Caco-2 (cell line): ENCODE measurements at regions of chr17 and their contacts with region 1.

Region 1: DNA sequence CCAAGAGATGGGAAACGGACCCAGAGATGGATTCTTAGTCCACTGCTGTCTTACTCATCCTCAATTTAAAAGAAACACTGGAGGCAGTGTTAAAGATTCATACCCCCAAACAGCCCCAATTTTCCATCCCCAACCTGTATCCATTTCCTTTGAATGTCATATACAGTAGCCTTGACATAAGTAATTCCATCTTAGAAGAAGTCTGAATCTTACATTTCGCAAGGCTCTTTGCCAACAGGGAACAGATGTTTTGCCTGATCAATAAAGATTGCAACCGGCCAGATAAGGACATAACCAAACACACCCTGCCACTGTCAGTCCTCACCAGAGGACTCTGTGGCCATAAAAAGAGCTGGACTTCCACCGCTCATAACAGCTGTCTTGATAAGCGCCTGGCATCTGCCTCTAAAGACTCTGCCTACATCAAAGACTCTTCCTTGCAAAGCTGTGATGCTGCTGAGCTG is 59.0 kb upstream of the MED9 start:
- DNase-seq: peak; percentile 74 to 88
- H3K4me3 ChIP-seq: no peak overlapping the region
- H3K4me3 Mint-ChIP-seq: no peak overlapping the region
- H3K27ac Mint-ChIP-seq: peak overlapping the region; percentile 43
- H3K4me1 ChIP-seq: peaks cover 34% of the 10 kb centered on the region
- H3K4me1 Mint-ChIP-seq: peaks cover 34% of the 10 kb centered on the region
- H3K27me3 ChIP-seq: no peaks in the 10 kb centered on the region
- H3K27me3 Mint-ChIP-seq: no peaks in the 10 kb centered on the region
- CTCF ChIP-seq: no peak

Region 2: GRCh38 chr17:17258998-17259397 is 158.8 kb before region 1 on chr17:
- CTCF ChIA-PET with region 1: no interaction called
- POLR2A ChIA-PET with region 1: no interaction called
- intact Hi-C with region 1: no loop called
- DNase-seq: no peak
- H3K4me3 ChIP-seq: no peak overlapping the region
- H3K4me3 Mint-ChIP-seq: no peak overlapping the region
- H3K27ac Mint-ChIP-seq: no peak overlapping the region
- H3K4me1 ChIP-seq: no peaks in the 10 kb centered on the region
- H3K4me1 Mint-ChIP-seq: no peaks in the 10 kb centered on the region
- H3K27me3 ChIP-seq: no peaks in the 10 kb centered on the region
- H3K27me3 Mint-ChIP-seq: no peaks in the 10 kb centered on the region
- CTCF ChIP-seq: no peak

Region 3: DNA sequence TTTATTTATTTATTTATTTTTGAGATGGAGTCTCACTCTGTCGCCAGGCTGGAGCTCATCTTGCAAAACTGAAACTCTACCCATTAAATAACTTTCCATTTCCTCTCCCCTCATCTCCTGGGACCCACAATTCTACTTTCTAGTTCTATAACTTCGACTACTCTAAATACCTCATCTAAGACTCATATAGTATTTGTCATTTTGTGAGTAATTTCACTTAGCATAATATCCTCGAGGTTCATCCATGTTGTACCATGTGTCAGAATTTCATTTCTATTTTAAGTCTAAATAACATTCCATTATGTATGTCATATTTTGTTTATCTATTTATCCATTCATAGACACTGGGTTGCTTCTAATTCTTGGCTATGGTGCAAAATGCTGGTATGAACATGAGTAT is 119.6 kb before region 1 on chr17:
- CTCF ChIA-PET with region 1: no interaction called
- POLR2A ChIA-PET with region 1: no interaction called
- intact Hi-C with region 1: no loop called
- DNase-seq: no peak
- H3K4me3 ChIP-seq: no peak overlapping the region
- H3K4me3 Mint-ChIP-seq: no peak overlapping the region
- H3K27ac Mint-ChIP-seq: no peak overlapping the region
- H3K4me1 ChIP-seq: no peaks in the 10 kb centered on the region; the same call in 1 of the 2 replicates
- H3K4me1 Mint-ChIP-seq: no peaks in the 10 kb centered on the region
- H3K27me3 ChIP-seq: no peaks in the 10 kb centered on the region
- H3K27me3 Mint-ChIP-seq: no peaks in the 10 kb centered on the region
- CTCF ChIP-seq: no peak

Region 4: GRCh38 chr17:17401271-17401781 is 16.4 kb before region 1 on chr17:
- CTCF ChIA-PET with region 1: no interaction called
- POLR2A ChIA-PET with region 1: interaction called, 11 read pairs
- intact Hi-C with region 1: no loop called
- DNase-seq: peak in 1 of 2 experiments; percentile 13
- H3K4me3 ChIP-seq: no peak overlapping the region
- H3K4me3 Mint-ChIP-seq: no peak overlapping the region
- H3K27ac Mint-ChIP-seq: no peak overlapping the region
- H3K4me1 ChIP-seq: peaks cover 4% of the 10 kb centered on the region; the same call in 1 of the 2 replicates
- H3K4me1 Mint-ChIP-seq: peaks cover 4% of the 10 kb centered on the region
- H3K27me3 ChIP-seq: no peaks in the 10 kb centered on the region
- H3K27me3 Mint-ChIP-seq: no peaks in the 10 kb centered on the region
- CTCF ChIP-seq: no peak

Region 5: DNA sequence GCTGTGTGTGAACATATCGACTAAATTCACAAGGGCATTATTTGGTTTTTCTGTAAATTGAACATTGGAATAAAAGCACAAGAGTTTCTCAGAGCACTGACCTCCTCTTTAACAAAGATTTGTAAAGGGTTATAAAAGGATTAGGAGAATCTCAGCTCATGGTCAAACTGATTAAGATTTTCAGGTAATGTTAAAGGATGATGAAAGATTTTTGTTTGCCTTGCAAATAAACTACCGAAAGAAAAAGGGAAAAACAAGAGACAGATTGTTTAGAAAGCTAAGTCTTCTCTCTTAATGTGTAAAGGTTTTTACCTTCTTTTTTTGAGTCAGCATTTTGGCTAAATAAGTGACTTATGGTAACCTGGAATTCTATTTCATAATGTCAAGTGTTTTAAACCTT is 11.5 kb after region 1 on chr17:
- CTCF ChIA-PET with region 1: interaction called, 3 read pairs
- POLR2A ChIA-PET with region 1: no interaction called
- intact Hi-C with region 1: loop called (anchors 1 kb)
- DNase-seq: no peak
- H3K4me3 ChIP-seq: no peak overlapping the region
- H3K4me3 Mint-ChIP-seq: no peak overlapping the region
- H3K27ac Mint-ChIP-seq: no peak overlapping the region
- H3K4me1 ChIP-seq: peaks cover 38% of the 10 kb centered on the region
- H3K4me1 Mint-ChIP-seq: peaks cover 29% of the 10 kb centered on the region
- H3K27me3 ChIP-seq: no peaks in the 10 kb centered on the region
- H3K27me3 Mint-ChIP-seq: no peaks in the 10 kb centered on the region
- CTCF ChIP-seq: no peak

Region 6: DNA sequence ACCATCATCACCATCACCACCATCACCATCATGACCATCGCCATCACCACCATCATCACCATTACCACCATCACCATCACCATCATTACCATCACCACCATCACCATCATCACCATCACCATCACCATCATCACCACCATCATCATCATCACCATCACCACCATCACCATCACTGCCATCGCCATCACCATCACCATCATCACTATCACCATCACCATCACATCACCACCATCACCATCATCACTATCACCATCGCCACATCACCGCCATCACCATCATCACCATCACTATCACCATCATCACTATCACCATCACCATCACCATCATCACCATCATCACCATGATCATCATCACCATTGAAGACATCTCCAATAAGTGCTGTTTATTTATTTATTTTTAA is 42.3 kb after region 1 on chr17:
- CTCF ChIA-PET with region 1: no interaction called
- POLR2A ChIA-PET with region 1: no interaction called
- intact Hi-C with region 1: loop called (anchors 1 kb)
- DNase-seq: no peak
- H3K4me3 ChIP-seq: no peak overlapping the region
- H3K4me3 Mint-ChIP-seq: no peak overlapping the region
- H3K27ac Mint-ChIP-seq: no peak overlapping the region
- H3K4me1 ChIP-seq: no peaks in the 10 kb centered on the region
- H3K4me1 Mint-ChIP-seq: no peaks in the 10 kb centered on the region
- H3K27me3 ChIP-seq: no peaks in the 10 kb centered on the region
- H3K27me3 Mint-ChIP-seq: peaks cover 6% of the 10 kb centered on the region
- CTCF ChIP-seq: no peak